ENCODE measurements at regions of chr16 and their contacts with region 1.

Region 1: GRCh38 chr16:3717235-3718018 is at the start of gene TRAP1:
- DNase-seq: peak; percentile 71
- H3K4me3 Mint-ChIP-seq: peak within 1 kb of the TSS; percentile 84
- H3K27ac Mint-ChIP-seq: peak within 1 kb of the TSS; percentile 61
- H3K4me1 Mint-ChIP-seq: peaks cover 29% of the 10 kb centered on the region
- H3K27me3 Mint-ChIP-seq: no peaks in the 10 kb centered on the region
- CTCF ChIP-seq: no peak
- total RNA-seq, gene TRAP1: 145 and 274 TPM in 2 replicates

Region 2: DNA sequence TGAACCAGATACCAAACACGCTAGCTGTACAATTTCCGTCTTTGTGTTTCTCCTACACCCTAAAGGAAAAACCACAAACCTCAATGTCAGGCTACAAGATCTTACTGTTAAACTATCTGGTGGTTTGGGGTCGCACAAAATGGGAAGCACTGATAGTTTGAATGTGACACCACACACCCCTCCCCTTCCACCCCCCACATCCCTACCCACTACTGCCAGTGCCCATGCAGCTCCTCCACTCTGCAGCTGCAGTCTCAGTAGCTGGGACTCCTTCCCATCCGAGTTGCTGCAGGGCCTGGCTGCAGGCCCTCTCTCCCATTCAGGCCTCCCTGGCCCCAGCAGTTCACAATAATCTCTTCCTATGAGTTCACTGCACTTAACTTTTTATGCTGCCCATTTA is 18.5 kb before region 1 on chr16:
- CTCF ChIA-PET with region 1: interaction called, 3 read pairs
- POLR2A ChIA-PET with region 1: interaction called, 13 read pairs
- intact Hi-C with region 1: no loop called
- DNase-seq: no peak
- H3K4me3 Mint-ChIP-seq: no peak overlapping the region
- H3K27ac Mint-ChIP-seq: no peak overlapping the region
- H3K4me1 Mint-ChIP-seq: no peaks in the 10 kb centered on the region
- H3K27me3 Mint-ChIP-seq: no peaks in the 10 kb centered on the region
- CTCF ChIP-seq: no peak